IMR-90 (cell line): ENCODE measurements at regions of chr13 and their contacts with region 1.

Region 1: GRCh38 chr13:43085545-43085944 is 62.2 kb downstream of the DNAJC15 start:
- DNase-seq: peak; percentile 61
- ATAC-seq: peak; percentile 51; the same call in 1 of the 2 replicates
- H3K4me3 ChIP-seq: no peak overlapping the region
- H3K27ac ChIP-seq: no peak overlapping the region
- H3K4me1 ChIP-seq: peaks cover 1% of the 10 kb centered on the region; the same call in 1 of the 2 replicates
- H3K27me3 ChIP-seq: no peaks in the 10 kb centered on the region
- CTCF ChIP-seq: peak; percentile 63
- POLR2A ChIP-seq: no peak
- RAD21 ChIP-seq: peak; percentile 68

Region 2: DNA sequence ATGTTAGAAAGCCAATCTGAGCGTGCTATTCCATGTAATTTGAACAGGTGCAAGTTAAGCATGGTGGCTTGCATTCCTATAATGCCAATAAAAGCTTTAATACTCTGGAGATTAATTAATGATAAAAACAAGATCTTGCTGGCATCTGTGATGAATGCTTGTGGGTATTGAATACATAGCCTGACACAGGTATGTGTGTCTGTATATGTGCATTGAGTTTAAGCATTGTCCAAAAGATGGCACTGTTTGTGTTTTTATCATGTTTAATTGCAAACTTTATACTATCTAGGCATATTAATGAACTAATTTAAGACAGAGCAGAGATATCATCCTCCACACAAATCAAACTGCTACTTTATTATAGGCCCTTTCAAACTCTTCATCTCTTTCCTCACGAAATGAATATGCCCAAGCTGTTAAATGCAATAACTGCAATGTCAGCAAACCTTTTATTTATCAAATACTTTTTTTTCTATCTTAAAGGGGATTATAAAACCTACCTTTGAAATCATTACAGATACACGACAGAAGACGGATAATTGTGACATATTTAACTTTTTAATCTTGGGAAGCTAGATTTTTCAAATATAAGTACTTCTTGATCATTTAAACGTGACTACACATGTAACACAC is 425.1 kb before region 1 on chr13:
- CTCF ChIA-PET with region 1: no interaction called
- POLR2A ChIA-PET with region 1: no interaction called
- dilution Hi-C with region 1: no loop called
- in situ Hi-C with region 1: no loop called
- intact Hi-C with region 1: loop called (anchors 5 kb)
- DNase-seq: peak; percentile 27
- ATAC-seq: peak; percentile 65
- H3K4me3 ChIP-seq: no peak overlapping the region
- H3K27ac ChIP-seq: no peak overlapping the region
- H3K4me1 ChIP-seq: no peaks in the 10 kb centered on the region
- H3K27me3 ChIP-seq: peaks cover 31% of the 10 kb centered on the region
- CTCF ChIP-seq: peak; percentile 53
- POLR2A ChIP-seq: no peak
- RAD21 ChIP-seq: peak; percentile 60

Region 3: DNA sequence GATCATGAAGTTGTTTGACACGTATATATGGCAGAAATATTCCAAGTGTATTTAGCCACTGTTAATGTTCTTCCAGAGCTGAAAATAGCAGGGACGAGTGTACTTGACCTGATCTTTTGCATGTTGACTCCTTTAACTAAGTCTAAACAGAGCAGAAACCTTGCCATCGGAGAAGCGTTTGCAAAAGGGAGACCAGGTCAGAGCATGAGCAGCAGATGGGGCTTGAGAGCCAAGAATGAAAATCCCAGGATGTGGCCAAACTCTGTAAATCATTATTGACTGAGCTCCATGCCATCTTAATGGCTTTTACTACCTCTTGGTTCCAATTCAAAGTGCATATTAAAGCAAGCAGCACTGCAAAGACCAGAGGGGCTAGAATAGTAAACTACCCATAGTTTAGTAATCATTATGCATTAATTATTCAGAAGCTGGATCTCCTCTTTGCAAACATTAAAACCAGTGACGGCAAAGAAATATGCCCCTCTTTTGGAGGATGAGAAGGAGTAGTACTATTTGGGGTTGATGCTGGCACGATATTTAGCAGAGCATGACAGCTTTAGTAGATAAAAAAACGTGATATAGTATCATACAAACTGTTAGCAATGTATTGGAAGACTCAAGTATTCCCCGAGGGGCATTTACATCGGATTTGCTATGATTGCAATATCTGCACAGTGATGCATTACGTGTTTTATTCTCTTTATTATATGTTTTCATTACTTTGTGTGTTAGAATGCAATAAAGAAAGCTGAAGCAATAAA is 248.4 kb before region 1 on chr13:
- CTCF ChIA-PET with region 1: no interaction called
- POLR2A ChIA-PET with region 1: no interaction called
- dilution Hi-C with region 1: no loop called
- in situ Hi-C with region 1: no loop called
- intact Hi-C with region 1: loop called (anchors 10 kb)
- DNase-seq: peak; percentile 51
- ATAC-seq: peak; percentile 70
- H3K4me3 ChIP-seq: no peak overlapping the region
- H3K27ac ChIP-seq: no peak overlapping the region
- H3K4me1 ChIP-seq: peaks cover 2% of the 10 kb centered on the region; the same call in 1 of the 2 replicates
- H3K27me3 ChIP-seq: peaks cover 2% of the 10 kb centered on the region
- CTCF ChIP-seq: peak; percentile 49
- POLR2A ChIP-seq: no peak
- RAD21 ChIP-seq: peak; percentile 59

Region 4: DNA sequence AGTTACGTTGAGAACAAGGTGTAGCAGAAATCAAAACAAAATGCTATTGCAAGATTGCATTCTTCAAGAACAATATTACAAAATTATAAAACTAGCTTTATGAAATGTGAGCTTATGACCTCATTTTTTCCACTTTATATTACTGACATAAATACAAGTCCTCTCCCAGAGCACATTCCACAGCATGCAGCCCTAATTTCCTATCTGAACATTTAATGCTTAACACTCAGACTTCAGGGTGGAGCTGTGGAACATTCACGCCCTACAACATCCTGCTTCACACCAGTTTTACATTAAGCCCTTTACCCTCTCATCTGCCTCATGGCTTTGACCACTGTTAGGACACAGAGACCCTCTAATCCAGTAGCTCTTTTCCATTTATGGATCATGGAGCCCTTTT is 159.0 kb before region 1 on chr13:
- CTCF ChIA-PET with region 1: no interaction called
- POLR2A ChIA-PET with region 1: no interaction called
- dilution Hi-C with region 1: no loop called
- in situ Hi-C with region 1: no loop called
- intact Hi-C with region 1: no loop called
- DNase-seq: no peak
- ATAC-seq: no peak
- H3K4me3 ChIP-seq: no peak overlapping the region
- H3K27ac ChIP-seq: no peak overlapping the region
- H3K4me1 ChIP-seq: no peaks in the 10 kb centered on the region
- H3K27me3 ChIP-seq: no peaks in the 10 kb centered on the region
- CTCF ChIP-seq: no peak
- POLR2A ChIP-seq: no peak
- RAD21 ChIP-seq: no peak

Region 5: DNA sequence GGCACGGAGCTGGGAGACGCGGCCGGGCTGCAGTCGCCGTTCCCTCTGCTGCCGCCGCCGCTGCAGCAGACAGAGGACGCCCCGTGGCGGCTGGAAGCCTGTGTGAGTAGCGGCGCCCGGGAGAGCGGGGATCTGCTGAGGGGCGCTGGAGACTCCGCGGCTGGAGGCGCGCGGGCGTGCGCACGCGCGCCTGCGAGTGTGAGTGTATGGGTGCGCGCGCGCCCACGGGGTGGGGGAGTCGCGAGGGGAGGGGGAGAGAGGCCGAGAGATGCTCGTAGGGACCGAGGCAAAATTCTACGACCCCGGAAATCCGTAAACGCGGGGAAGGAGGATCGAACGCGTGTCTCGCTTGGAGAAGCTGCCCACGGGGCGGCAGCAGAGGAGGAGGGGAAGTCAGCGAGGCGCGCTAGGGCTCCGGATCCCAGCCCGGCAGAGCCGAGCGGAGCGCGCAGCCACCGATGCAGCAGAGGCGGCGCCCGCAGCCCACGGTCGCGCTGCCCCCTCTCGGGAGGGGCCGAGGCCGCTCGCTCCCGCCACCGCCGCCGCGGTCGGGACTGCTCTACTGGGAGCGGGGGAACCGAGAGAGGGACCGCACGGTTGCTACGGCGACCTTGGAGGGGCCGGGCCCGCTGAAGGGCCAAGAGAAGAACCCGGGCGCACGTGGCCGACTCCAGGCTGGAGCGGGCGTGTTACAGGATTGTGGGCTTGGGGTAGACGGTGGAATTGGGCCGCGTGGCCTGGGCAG is 701.4 kb after region 1 on chr13 and contains the start of gene ENOX1:
- CTCF ChIA-PET with region 1: no interaction called
- POLR2A ChIA-PET with region 1: no interaction called
- dilution Hi-C with region 1: no loop called
- in situ Hi-C with region 1: loop called (anchors 10 kb)
- intact Hi-C with region 1: loop called (anchors 5 kb)
- DNase-seq: peak; percentile 74
- ATAC-seq: peak; percentile 79
- H3K4me3 ChIP-seq: peak within 1 kb of the TSS; percentile 52
- H3K27ac ChIP-seq: peak within 1 kb of the TSS; percentile 11
- H3K4me1 ChIP-seq: no peaks in the 10 kb centered on the region
- H3K27me3 ChIP-seq: no peaks in the 10 kb centered on the region; the same call in 1 of the 2 replicates
- CTCF ChIP-seq: peak; percentile 18; the same call in 1 of the 2 replicates
- POLR2A ChIP-seq: no peak
- RAD21 ChIP-seq: peak; percentile 36
- total RNA-seq, gene ENOX1: 1.3 and 1.9 TPM in 2 replicates